GM23248 (cell line): ENCODE measurements at regions of chr2 and their contacts with region 1.

Region 1: DNA sequence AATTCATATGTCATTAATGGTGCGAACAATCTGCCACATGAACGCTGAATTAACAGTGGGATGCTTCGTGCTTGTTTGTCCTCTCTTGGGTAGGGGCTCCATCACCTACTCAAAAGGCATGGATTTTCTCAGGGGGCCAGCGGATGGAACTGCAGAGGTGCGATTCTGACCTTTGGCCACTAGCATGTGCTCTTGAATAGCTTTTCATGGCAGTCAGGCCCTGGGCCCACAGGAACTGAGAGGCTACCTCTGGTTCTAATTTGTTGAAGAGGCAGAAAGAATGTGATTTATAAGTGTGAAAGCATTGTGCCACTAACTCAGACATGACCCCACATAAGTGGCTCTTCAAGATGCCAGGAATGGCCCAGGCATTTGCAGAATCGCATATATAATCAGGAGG is 283.2 kb downstream of the INSIG2 start:
- DNase-seq: peak; percentile 82
- H3K4me3 ChIP-seq: no peak overlapping the region
- H3K27ac ChIP-seq: no peak overlapping the region
- H3K4me1 ChIP-seq: peaks cover 12% of the 10 kb centered on the region
- H3K27me3 ChIP-seq: no peaks in the 10 kb centered on the region

Region 2: GRCh38 chr2:118219611-118220010 is 151.9 kb before region 1 on chr2:
- in situ Hi-C with region 1: loop called (anchors 10 kb)
- DNase-seq: no peak
- H3K4me3 ChIP-seq: no peak overlapping the region
- H3K27ac ChIP-seq: no peak overlapping the region
- H3K4me1 ChIP-seq: peaks cover 12% of the 10 kb centered on the region
- H3K27me3 ChIP-seq: no peaks in the 10 kb centered on the region